Activated B cell treated with CpG ODN at 0.5 μM for 24 hours (primary cell): ENCODE measurements at regions of chr18 and their contacts with region 1.

Region 1: GRCh38 chr18:77949355-77949973 is 699.8 kb downstream of the GALR1 start:
- DNase-seq: no peak
- ATAC-seq: no peak
- H3K4me3 Mint-ChIP-seq: no peak overlapping the region
- H3K27ac Mint-ChIP-seq: no peak overlapping the region
- H3K4me1 Mint-ChIP-seq: no peaks in the 10 kb centered on the region
- H3K27me3 Mint-ChIP-seq: no peaks in the 10 kb centered on the region
- CTCF ChIP-seq: no peak

Region 2: GRCh38 chr18:78480262-78481054 is 531.0 kb after region 1 on chr18:
- CTCF ChIA-PET with region 1: no interaction called
- POLR2A ChIA-PET with region 1: no interaction called
- intact Hi-C with region 1: no loop called
- DNase-seq: no peak
- ATAC-seq: no peak
- H3K4me3 Mint-ChIP-seq: no peak overlapping the region
- H3K27ac Mint-ChIP-seq: no peak overlapping the region
- H3K4me1 Mint-ChIP-seq: no peaks in the 10 kb centered on the region
- H3K27me3 Mint-ChIP-seq: no peaks in the 10 kb centered on the region
- CTCF ChIP-seq: no peak

Region 3: GRCh38 chr18:78739882-78740677 is 790.6 kb after region 1 on chr18:
- CTCF ChIA-PET with region 1: no interaction called
- POLR2A ChIA-PET with region 1: no interaction called
- intact Hi-C with region 1: loop called (anchors 5 kb)
- DNase-seq: no peak
- ATAC-seq: no peak
- H3K4me3 Mint-ChIP-seq: no peak overlapping the region
- H3K27ac Mint-ChIP-seq: no peak overlapping the region
- H3K4me1 Mint-ChIP-seq: no peaks in the 10 kb centered on the region
- H3K27me3 Mint-ChIP-seq: no peaks in the 10 kb centered on the region
- CTCF ChIP-seq: no peak